MCF 10A (cell line): ENCODE measurements at regions of chr2 and their contacts with region 1.

Region 1: GRCh38 chr2:170770606-170771420 is 635 bp downstream of the ERICH2 start:
- DNase-seq: peak; percentile 83
- H3K4me3 Mint-ChIP-seq: peak overlapping the region; percentile 92
- H3K27ac Mint-ChIP-seq: peak overlapping the region; percentile 94
- H3K4me1 Mint-ChIP-seq: no peaks in the 10 kb centered on the region
- H3K27me3 Mint-ChIP-seq: no peaks in the 10 kb centered on the region
- CTCF ChIP-seq: no peak

Region 2: GRCh38 chr2:170739048-170739447 is 31.8 kb before region 1 on chr2:
- CTCF ChIA-PET with region 1: interaction called, 11 read pairs
- POLR2A ChIA-PET with region 1: interaction called, 21 read pairs
- intact Hi-C with region 1: loop called (anchors 5 kb)
- DNase-seq: peak; percentile 80
- H3K4me3 Mint-ChIP-seq: peak overlapping the region; percentile 22
- H3K27ac Mint-ChIP-seq: peak overlapping the region; percentile 98
- H3K4me1 Mint-ChIP-seq: peaks cover 18% of the 10 kb centered on the region
- H3K27me3 Mint-ChIP-seq: no peaks in the 10 kb centered on the region
- CTCF ChIP-seq: no peak

Region 3: GRCh38 chr2:170747921-170748320 is 22.9 kb before region 1 on chr2:
- CTCF ChIA-PET with region 1: interaction called, 6 read pairs
- POLR2A ChIA-PET with region 1: interaction called, 22 read pairs
- intact Hi-C with region 1: no loop called
- DNase-seq: peak; percentile 85
- H3K4me3 Mint-ChIP-seq: peak overlapping the region; percentile 57
- H3K27ac Mint-ChIP-seq: peak overlapping the region; percentile 90
- H3K4me1 Mint-ChIP-seq: peaks cover 27% of the 10 kb centered on the region
- H3K27me3 Mint-ChIP-seq: no peaks in the 10 kb centered on the region
- CTCF ChIP-seq: no peak